ENCODE measurements at regions of chr10 and their contacts with region 1.

Region 1: DNA sequence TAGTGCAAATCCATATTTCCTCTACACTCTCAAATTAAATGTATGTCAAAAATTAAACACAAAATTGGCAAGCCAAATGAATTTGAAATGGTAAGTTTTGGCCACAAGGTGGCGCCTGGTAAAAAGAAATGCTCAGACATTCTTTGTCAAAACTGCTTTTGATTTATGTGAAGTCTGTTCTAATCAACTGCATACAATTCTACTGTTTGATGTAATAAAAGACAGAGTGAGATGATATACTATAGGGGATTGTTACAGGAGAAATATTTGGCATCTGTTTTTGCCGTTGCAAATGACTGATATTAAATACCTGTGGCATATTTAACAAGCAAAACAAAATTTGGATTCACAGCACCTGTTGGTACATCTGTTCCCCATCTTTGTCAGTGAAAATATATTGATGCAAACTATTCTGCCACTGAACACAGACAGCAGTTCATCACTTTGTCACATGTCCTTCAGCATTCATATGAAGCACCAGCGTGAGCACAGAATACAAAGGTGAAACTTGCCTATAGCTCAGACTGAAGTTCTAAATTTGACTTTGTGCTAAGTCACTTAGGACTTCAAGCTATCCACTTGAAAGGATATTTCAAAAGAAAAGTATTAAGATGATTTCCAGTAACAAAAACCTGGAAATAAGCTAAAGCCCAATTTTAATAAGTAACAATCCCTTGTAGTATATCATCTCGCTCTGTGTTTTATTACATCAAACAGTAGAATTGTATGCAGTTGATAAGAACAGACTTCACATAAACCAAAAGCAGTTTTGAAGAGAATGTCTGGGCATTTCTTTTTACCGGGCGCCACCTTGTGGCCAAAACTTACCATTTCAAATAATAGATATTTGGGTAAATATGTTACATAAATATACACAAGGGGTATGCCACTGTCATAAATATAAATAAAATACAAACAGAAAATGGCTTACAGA is 10.2 kb upstream of the CH25H start:
- DNase-seq: peak; percentile 20
- ATAC-seq: peak; percentile 49
- H3K4me3 Mint-ChIP-seq: no peak overlapping the region
- H3K27ac Mint-ChIP-seq: no peak overlapping the region
- H3K4me1 Mint-ChIP-seq: peaks cover 10% of the 10 kb centered on the region
- H3K27me3 Mint-ChIP-seq: peaks cover 2% of the 10 kb centered on the region
- CTCF ChIP-seq: no peak

Region 2: DNA sequence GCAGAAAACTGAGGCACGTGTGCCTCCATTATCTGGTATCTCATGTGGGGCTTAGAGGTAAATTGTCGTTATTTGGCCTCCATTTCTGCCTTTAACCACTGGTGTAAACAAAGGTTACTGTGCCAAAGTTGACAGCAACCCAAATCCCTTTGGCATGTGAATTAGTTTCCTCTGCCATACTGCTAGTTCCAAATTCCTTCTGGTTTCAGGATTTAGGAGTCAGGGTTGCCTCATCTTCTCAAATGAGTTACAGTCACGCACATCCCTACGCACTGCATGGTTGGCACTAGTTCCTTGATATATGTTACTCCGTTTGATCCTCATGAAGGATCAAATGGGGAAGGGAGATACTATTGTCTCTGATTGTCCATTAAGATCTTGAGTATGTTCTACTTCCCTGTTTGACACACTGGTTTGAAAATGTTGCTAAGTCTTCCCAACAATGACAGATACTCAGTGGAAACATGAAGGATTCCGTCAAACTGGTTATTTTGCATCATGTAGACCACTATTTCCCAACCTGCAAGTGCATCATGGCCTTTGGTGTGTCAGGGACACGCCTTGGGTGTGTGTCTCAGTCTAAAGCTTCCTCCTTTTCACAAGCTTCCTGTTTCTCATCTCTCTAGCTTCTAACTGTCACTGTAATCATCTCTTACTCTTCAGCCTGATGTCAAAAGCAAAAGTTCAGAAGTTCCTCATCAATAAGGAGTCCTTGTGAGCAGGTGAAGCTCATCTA is 457.8 kb before region 1 on chr10 and contains the start of gene LIPN:
- CTCF ChIA-PET with region 1: no interaction called
- POLR2A ChIA-PET with region 1: no interaction called
- intact Hi-C with region 1: no loop called
- DNase-seq: no peak
- ATAC-seq: peak; percentile 61
- H3K4me3 Mint-ChIP-seq: no peak within 1 kb of the TSS
- H3K27ac Mint-ChIP-seq: peak within 1 kb of the TSS; percentile 32
- H3K4me1 Mint-ChIP-seq: peaks cover 6% of the 10 kb centered on the region
- H3K27me3 Mint-ChIP-seq: peaks cover 2% of the 10 kb centered on the region
- CTCF ChIP-seq: no peak
- total RNA-seq, gene LIPN: 0.24 and 0.27 TPM in 2 replicates

Region 3: DNA sequence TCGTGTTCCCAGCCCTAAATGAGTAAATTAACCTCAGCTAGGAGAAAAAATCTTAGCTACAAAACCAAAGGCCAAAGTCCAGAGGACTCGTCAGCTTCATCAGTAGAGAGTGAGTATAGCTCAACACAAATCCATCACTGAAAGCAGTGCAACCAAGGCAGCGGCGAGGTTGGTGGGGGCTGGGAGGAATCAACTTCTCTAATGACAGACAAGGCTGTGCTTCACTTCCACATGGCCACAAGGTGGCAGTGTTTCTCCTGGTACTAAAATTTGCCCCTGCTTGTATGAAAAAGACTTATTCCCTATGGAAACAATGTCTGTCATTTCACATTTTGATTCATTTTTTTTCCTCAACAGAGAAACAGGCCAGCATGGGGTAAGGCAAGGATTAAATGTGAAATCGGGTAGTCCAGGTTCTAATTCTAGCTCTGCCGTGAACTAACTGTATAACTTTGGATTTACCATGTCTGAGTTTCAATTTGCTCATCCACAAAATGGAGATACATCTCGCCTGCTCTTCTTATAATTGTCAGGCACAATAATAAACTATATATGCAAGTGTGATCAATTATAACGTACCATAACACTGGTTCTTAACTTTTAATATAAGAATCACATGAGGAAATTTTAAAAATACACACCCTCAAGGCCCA is 187.4 kb before region 1 on chr10:
- CTCF ChIA-PET with region 1: interaction called, 71 read pairs
- POLR2A ChIA-PET with region 1: no interaction called
- intact Hi-C with region 1: loop called (anchors 1 kb)
- DNase-seq: peak; percentile 22
- ATAC-seq: peak; percentile 82
- H3K4me3 Mint-ChIP-seq: no peak overlapping the region
- H3K27ac Mint-ChIP-seq: no peak overlapping the region
- H3K4me1 Mint-ChIP-seq: peaks cover 15% of the 10 kb centered on the region
- H3K27me3 Mint-ChIP-seq: no peaks in the 10 kb centered on the region
- CTCF ChIP-seq: peak; percentile 70

Region 4: GRCh38 chr10:89245802-89246201 is 28.5 kb after region 1 on chr10:
- CTCF ChIA-PET with region 1: interaction called, 17 read pairs
- POLR2A ChIA-PET with region 1: no interaction called
- intact Hi-C with region 1: loop called (anchors 1 kb)
- DNase-seq: no peak
- ATAC-seq: peak; percentile 62
- H3K4me3 Mint-ChIP-seq: no peak overlapping the region
- H3K27ac Mint-ChIP-seq: peak overlapping the region; percentile 36
- H3K4me1 Mint-ChIP-seq: peaks cover 64% of the 10 kb centered on the region
- H3K27me3 Mint-ChIP-seq: no peaks in the 10 kb centered on the region
- CTCF ChIP-seq: no peak

Region 5: GRCh38 chr10:89274928-89275327 is 57.6 kb after region 1 on chr10:
- CTCF ChIA-PET with region 1: no interaction called
- POLR2A ChIA-PET with region 1: no interaction called
- intact Hi-C with region 1: no loop called
- DNase-seq: no peak
- ATAC-seq: no peak
- H3K4me3 Mint-ChIP-seq: no peak overlapping the region
- H3K27ac Mint-ChIP-seq: no peak overlapping the region
- H3K4me1 Mint-ChIP-seq: no peaks in the 10 kb centered on the region
- H3K27me3 Mint-ChIP-seq: peaks cover 7% of the 10 kb centered on the region
- CTCF ChIP-seq: no peak

Region 6: GRCh38 chr10:89369156-89370105 is 152.1 kb after region 1 on chr10:
- CTCF ChIA-PET with region 1: interaction called, 8 read pairs
- POLR2A ChIA-PET with region 1: no interaction called
- intact Hi-C with region 1: loop called (anchors 1 kb)
- DNase-seq: no peak
- ATAC-seq: no peak
- H3K4me3 Mint-ChIP-seq: no peak overlapping the region
- H3K27ac Mint-ChIP-seq: no peak overlapping the region
- H3K4me1 Mint-ChIP-seq: peaks cover 6% of the 10 kb centered on the region
- H3K27me3 Mint-ChIP-seq: peaks cover 2% of the 10 kb centered on the region
- CTCF ChIP-seq: no peak

Measured in activated B cell treated with CpG ODN at 0.5 μM for 24 hours (primary cell).